H1 (cell line): ENCODE measurements at regions of chr10 and their contacts with region 1.

Region 1: GRCh38 chr10:25875556-25876165 is 58.4 kb upstream of the MYO3A start:
- DNase-seq: peak; percentile 38 to 89
- H3K4me3 ChIP-seq: no peak overlapping the region
- H3K27ac ChIP-seq: no peak overlapping the region
- H3K4me1 ChIP-seq: peaks cover 0 to 2% (median 0%) of the 10 kb centered on the region in 4 experiments; a peak in 1 of 7 replicates
- H3K27me3 ChIP-seq: no peaks in the 10 kb centered on the region
- CTCF ChIP-seq: peak; percentile 83 to 88 (median 84)
- EP300 ChIP-seq: no peak
- POLR2A ChIP-seq: no peak
- RAD21 ChIP-seq: peak; percentile 95 to 96

Region 2: DNA sequence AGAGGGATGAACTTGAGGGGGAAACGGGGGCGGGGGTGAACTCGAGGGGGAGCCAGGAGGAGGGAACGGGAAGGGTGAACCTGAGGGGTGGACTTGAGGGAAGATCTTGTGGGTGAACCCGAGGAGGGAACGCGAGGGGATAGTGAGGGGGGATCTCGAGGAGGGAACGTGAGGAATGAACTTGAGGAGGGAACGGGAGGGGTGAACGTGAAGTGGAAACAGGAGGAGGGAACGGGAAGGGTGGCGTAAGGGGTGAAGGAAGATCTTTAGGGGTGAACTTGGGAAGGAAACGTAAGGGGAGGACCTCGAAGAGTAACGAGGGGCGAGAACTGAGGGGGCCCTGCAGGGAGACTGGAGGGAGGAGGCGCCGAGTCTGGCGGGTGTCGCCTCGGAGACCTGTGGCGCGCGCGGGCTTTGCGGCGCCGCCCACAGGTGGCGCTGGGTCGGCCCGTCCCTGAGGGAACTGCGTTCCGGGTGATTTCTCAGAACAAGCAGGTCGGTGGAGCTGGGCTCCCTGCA is 59.0 kb after region 1 on chr10:
- CTCF ChIA-PET with region 1: interaction called, 13 read pairs
- POLR2A ChIA-PET with region 1: no interaction called
- DNase-seq: peak in 1 of 2 experiments; percentile 71
- H3K4me3 ChIP-seq: peak overlapping the region; percentile 37 to 78 (median 77)
- H3K27ac ChIP-seq: no peak overlapping the region
- H3K4me1 ChIP-seq: peaks cover 0 to 5% (median 0%) of the 10 kb centered on the region in 4 experiments; a peak in 1 of 7 replicates
- H3K27me3 ChIP-seq: peaks cover 0 to 5% (median under 1%) of the 10 kb centered on the region in 4 experiments; a peak in 4 of 7 replicates
- CTCF ChIP-seq: peak; percentile 41 to 64 (median 47)
- EP300 ChIP-seq: no peak
- POLR2A ChIP-seq: no peak
- RAD21 ChIP-seq: peak; percentile 38 to 49

Region 3: GRCh38 chr10:26269754-26270153 is 394.1 kb after region 1 on chr10:
- CTCF ChIA-PET with region 1: interaction called, 43 read pairs
- POLR2A ChIA-PET with region 1: no interaction called
- DNase-seq: no peak
- H3K4me3 ChIP-seq: no peak overlapping the region
- H3K27ac ChIP-seq: no peak overlapping the region
- H3K4me1 ChIP-seq: peaks cover 0 to 2% (median under 1%) of the 10 kb centered on the region in 4 experiments; a peak in 3 of 7 replicates
- H3K27me3 ChIP-seq: no peaks in the 10 kb centered on the region
- CTCF ChIP-seq: peak in 2 of 3 experiments; percentile 63 to 79; a peak in 3 of 4 replicates
- EP300 ChIP-seq: no peak
- POLR2A ChIP-seq: no peak
- RAD21 ChIP-seq: peak; percentile 88 to 91

Region 4: GRCh38 chr10:26278295-26278694 is 402.6 kb after region 1 on chr10:
- CTCF ChIA-PET with region 1: interaction called, 43 read pairs
- POLR2A ChIA-PET with region 1: no interaction called
- DNase-seq: no peak
- H3K4me3 ChIP-seq: no peak overlapping the region
- H3K27ac ChIP-seq: no peak overlapping the region
- H3K4me1 ChIP-seq: no peaks in the 10 kb centered on the region
- H3K27me3 ChIP-seq: no peaks in the 10 kb centered on the region
- CTCF ChIP-seq: no peak
- EP300 ChIP-seq: no peak
- POLR2A ChIP-seq: no peak
- RAD21 ChIP-seq: no peak